Activated CD4-positive, alpha-beta T cell treated with anti-CD3 and anti-CD28 coated beads, Interleukin-2, amount 10 ng/mL, durations not matched to agents 7 days and 5 days (primary cell): ENCODE measurements at regions of chr3 and their contacts with region 1.

Region 1: DNA sequence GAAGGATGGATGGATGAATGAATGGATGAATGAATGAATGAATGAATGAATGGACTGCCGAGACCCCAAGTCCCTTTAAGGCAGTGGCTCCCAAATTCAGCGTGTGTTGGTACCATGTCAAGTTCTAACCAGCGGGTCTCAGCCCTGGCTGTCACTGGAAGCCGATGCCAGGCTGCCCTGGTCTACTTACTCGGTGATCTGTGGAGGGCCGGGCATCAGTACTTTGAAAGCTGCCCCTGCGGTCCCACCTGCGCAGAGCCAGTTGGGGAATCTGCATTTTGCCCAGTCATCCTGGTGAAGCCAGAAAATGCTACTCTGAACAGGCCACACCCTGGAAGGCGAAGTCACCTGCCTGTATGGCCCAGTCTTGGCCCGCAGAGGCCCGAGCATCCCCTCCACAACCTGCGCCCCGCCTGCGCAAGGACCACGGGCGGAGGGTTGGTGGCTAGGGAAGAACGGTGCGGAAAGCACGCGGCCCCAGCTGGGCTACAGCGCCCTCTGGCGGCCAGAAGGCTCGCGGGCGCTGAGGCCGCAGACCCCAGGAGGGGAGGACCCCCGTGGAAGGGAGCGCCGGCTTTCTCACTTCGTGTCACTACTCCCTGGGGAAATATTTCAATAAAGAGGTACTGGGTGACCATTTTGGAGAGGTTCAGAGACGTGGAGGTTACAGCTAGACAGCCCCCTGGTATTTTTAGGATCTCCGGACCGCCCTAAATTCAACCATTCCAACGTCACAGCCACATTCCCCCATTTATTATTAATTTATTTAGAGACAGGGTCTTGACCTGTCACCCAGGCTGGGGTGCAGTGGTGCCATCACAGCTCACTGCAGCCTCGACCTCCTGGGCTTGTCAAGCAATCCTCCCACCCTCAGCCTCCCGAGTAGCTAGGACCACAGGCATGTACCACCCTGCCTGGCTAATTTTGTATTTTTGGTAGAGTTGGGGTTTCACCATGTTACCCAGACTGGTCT is 34.9 kb downstream of the PRKCD start:
- DNase-seq: peak; percentile 58
- H3K4me3 Mint-ChIP-seq: no peak overlapping the region
- H3K27ac Mint-ChIP-seq: peak overlapping the region; percentile 73
- H3K4me1 Mint-ChIP-seq: peaks cover 12% of the 10 kb centered on the region
- H3K27me3 Mint-ChIP-seq: no peaks in the 10 kb centered on the region

Region 2: DNA sequence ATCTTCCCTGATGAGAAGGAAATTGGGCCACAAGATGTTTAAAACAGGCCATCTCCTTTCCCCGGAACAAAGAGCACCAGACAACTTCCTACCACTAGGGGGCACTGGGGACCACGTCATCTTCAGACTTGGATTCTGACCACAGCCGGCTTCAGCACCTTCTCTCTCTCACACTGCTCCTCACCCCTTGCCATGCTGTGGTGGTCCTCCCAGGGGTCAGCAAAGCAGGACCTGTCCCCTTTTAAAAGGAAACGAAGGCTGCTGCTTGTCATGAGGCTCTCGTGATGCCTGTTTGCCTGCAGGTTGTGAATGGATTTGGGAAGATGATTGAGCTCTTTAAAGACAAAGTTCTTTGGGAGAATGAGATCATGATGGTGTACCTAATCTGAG is 81.9 kb before region 1 on chr3:
- CTCF ChIA-PET with region 1: interaction called, 31 read pairs
- POLR2A ChIA-PET with region 1: no interaction called
- DNase-seq: peak; percentile 89
- H3K4me3 Mint-ChIP-seq: no peak overlapping the region
- H3K27ac Mint-ChIP-seq: no peak overlapping the region
- H3K4me1 Mint-ChIP-seq: peaks cover 25% of the 10 kb centered on the region
- H3K27me3 Mint-ChIP-seq: no peaks in the 10 kb centered on the region

Region 3: GRCh38 chr3:53122933-53123305 is 73.0 kb before region 1 on chr3:
- CTCF ChIA-PET with region 1: interaction called, 12 read pairs
- POLR2A ChIA-PET with region 1: no interaction called
- DNase-seq: no peak
- H3K4me3 Mint-ChIP-seq: no peak overlapping the region
- H3K27ac Mint-ChIP-seq: no peak overlapping the region
- H3K4me1 Mint-ChIP-seq: peaks cover 4% of the 10 kb centered on the region
- H3K27me3 Mint-ChIP-seq: no peaks in the 10 kb centered on the region

Region 4: DNA sequence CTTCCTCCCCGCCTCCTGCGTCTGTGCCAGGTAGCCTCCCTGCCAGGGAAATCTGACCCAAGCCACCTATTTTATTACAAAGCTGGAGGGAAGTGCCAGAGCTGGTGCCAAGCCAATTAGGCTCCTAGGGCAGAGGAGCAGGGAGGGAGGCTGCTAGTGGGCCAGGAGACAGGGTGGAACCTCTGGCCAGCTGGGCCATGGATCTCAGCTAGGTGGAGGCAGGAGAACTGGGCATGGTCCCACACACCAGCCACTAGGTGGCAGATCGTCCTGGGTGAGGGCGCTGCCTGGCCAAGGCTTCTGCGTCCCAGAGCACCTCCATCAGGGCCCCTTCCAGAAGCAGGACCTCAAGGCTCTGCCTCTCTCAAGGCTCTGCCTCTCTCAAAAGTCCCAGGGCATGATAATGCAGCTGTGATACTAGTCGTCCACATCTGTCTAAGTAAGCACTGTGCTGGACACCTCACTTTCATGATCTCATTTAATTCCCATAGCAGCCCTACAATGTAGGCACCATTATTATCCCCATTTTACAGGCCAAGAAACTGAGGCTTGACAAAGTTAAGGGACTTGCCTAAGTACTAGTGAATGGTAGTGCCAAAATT is 61.2 kb before region 1 on chr3:
- CTCF ChIA-PET with region 1: interaction called, 21 read pairs
- POLR2A ChIA-PET with region 1: no interaction called
- DNase-seq: peak; percentile 74
- H3K4me3 Mint-ChIP-seq: no peak overlapping the region
- H3K27ac Mint-ChIP-seq: no peak overlapping the region
- H3K4me1 Mint-ChIP-seq: peaks cover 17% of the 10 kb centered on the region
- H3K27me3 Mint-ChIP-seq: no peaks in the 10 kb centered on the region

Region 5: DNA sequence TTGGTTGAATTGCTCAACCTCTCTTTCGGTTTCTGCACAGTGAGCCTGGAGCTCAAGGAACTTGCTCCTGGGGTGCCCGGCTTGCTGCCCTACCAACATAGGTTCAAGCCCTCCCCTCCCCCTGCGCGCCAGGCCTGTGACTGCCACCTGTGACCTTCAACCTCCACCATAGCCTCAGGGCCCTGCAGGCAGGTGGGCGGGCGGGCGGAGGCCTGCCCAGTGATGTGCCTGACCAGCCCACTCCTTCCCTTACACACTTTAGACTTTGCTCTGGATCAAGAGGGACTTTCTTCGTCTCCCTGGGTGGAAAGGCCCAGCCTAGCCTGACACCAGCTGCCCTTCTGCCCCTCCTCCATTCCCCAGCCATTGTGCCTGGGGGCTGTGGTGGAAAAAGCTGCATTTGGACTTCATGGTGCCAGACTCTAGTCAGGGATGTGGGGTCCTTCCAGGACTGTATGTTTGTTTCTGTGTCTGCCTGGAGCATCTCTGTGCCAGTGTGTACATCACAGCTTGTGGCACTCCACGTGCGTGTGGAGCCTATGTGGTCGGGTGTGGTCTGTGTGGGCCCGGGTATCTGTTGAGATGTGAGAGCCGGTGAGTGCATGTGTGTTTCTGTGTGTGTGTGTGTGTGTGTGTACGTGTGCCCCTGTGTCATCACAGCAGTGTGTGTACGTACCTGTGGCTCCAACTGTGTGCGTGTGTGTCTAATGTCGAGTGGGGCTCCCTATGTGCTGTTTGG is 25.4 kb before region 1 on chr3:
- CTCF ChIA-PET with region 1: interaction called, 14 read pairs
- POLR2A ChIA-PET with region 1: no interaction called
- DNase-seq: peak; percentile 41
- H3K4me3 Mint-ChIP-seq: no peak overlapping the region
- H3K27ac Mint-ChIP-seq: no peak overlapping the region
- H3K4me1 Mint-ChIP-seq: peaks cover 40% of the 10 kb centered on the region
- H3K27me3 Mint-ChIP-seq: no peaks in the 10 kb centered on the region